GM12878 (cell line): ENCODE measurements at regions of chr10 and their contacts with region 1.

Region 1: GRCh38 chr10:3776796-3777571 is 8.0 kb downstream of the KLF6 start:
- DNase-seq: no peak
- ATAC-seq: no peak
- H3K4me3 ChIP-seq: no peak overlapping the region
- H3K27ac ChIP-seq: no peak overlapping the region
- H3K4me1 ChIP-seq: peaks cover 10% of the 10 kb centered on the region
- H3K27me3 ChIP-seq: no peaks in the 10 kb centered on the region
- CTCF ChIP-seq: no peak
- EP300 ChIP-seq: no peak
- POLR2A ChIP-seq: no peak; the same call in 1 of the 2 replicates
- RAD21 ChIP-seq: no peak

Region 2: GRCh38 chr10:3723766-3724165 is 53.2 kb before region 1 on chr10:
- CTCF ChIA-PET with region 1: no interaction called
- POLR2A ChIA-PET with region 1: no interaction called
- RAD21 ChIA-PET with region 1: no interaction called
- SMC1A ChIA-PET with region 1: no interaction called
- in situ Hi-C with region 1: no loop called
- intact Hi-C with region 1: no loop called
- DNase-seq: no peak
- ATAC-seq: no peak
- H3K4me3 ChIP-seq: no peak overlapping the region
- H3K27ac ChIP-seq: no peak overlapping the region
- H3K4me1 ChIP-seq: no peaks in the 10 kb centered on the region
- H3K27me3 ChIP-seq: no peaks in the 10 kb centered on the region; a peak in 1 of 4 replicates
- CTCF ChIP-seq: no peak
- EP300 ChIP-seq: no peak
- POLR2A ChIP-seq: no peak
- RAD21 ChIP-seq: no peak

Region 3: DNA sequence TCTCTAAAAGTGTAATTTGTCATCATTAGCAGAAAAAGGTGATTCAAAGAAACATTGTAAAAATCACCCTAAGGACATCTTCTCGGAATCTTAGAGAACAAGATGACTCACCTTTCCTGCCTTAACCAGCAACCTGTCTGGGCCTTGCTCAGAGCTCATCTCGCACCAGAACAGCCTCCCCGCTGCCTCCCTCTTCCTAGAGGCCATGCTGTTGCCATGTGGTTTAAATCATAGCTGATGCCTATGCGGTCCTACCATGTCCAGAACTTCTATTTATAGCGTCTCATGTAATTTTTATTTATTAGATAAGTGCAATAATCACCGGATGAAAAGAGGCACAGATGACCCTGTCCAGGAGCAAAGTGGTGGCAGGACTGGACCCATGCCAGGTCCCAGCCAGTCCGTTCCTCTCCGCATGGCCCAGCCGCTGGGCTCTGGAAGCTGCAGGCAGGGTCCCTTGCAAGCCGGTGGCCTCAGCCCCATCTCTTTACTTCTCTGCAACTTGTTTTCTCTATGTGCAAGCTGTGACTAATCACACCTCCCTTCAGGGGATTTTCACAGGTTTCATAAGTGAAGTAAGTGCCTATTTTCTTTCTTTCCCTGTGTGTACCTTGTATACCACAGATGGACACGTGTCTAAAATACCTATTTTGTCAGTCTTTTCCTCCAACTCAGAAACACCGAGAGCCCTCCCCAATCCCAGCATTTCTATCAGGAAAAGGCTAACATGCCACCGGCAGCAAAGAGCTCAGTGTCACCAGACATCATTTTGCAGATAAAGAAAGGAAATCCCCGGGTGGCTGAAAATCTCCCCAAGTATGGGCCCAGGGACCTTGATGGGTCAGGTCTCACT is 19.1 kb before region 1 on chr10:
- CTCF ChIA-PET with region 1: interaction called, 12 read pairs
- POLR2A ChIA-PET with region 1: interaction called, 27 read pairs
- RAD21 ChIA-PET with region 1: interaction called, 43 read pairs
- SMC1A ChIA-PET with region 1: interaction called, 13 read pairs
- in situ Hi-C with region 1: no loop called
- intact Hi-C with region 1: no loop called
- DNase-seq: peak; percentile 82
- ATAC-seq: peak; percentile 88
- H3K4me3 ChIP-seq: no peak overlapping the region; the same call in 1 of the 2 replicates
- H3K27ac ChIP-seq: peak overlapping the region; percentile 76
- H3K4me1 ChIP-seq: peaks cover 35% of the 10 kb centered on the region
- H3K27me3 ChIP-seq: no peaks in the 10 kb centered on the region
- CTCF ChIP-seq: no peak
- EP300 ChIP-seq: peak; percentile 65 to 81; a peak in 3 of 4 replicates
- POLR2A ChIP-seq: peak; percentile 44; the same call in 1 of the 2 replicates
- RAD21 ChIP-seq: peak; percentile 9; the same call in 1 of the 2 replicates

Region 4: DNA sequence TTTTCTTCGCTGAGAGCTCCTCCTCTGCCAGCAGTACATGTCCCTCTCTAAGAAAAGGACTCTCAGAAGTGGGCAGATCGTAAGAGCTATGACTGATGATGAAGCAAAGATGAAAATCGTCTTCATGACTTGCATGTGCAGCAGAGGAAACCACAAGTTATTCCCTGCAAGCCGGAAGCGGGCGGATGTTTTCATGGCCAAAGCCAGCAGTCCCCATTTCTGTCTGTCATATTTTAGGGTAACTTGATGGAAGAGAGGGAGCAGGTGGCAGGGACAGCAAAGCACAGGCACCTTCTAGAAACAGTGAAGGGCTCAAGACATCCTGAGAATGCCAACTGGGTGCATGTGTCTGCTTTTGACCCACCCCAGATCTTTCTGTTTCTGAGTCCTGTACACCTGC is 11.8 kb before region 1 on chr10:
- CTCF ChIA-PET with region 1: interaction called, 5 read pairs
- POLR2A ChIA-PET with region 1: interaction called, 10 read pairs
- RAD21 ChIA-PET with region 1: interaction called, 13 read pairs
- SMC1A ChIA-PET with region 1: interaction called, 15 read pairs
- in situ Hi-C with region 1: no loop called
- intact Hi-C with region 1: no loop called
- DNase-seq: no peak
- ATAC-seq: no peak
- H3K4me3 ChIP-seq: no peak overlapping the region
- H3K27ac ChIP-seq: no peak overlapping the region
- H3K4me1 ChIP-seq: peaks cover 32% of the 10 kb centered on the region
- H3K27me3 ChIP-seq: no peaks in the 10 kb centered on the region
- CTCF ChIP-seq: no peak
- EP300 ChIP-seq: no peak
- POLR2A ChIP-seq: no peak
- RAD21 ChIP-seq: no peak